Astrocyte of the cerebellum (primary cell): ENCODE measurements at regions of chr2 and their contacts with region 1.

Region 1: DNA sequence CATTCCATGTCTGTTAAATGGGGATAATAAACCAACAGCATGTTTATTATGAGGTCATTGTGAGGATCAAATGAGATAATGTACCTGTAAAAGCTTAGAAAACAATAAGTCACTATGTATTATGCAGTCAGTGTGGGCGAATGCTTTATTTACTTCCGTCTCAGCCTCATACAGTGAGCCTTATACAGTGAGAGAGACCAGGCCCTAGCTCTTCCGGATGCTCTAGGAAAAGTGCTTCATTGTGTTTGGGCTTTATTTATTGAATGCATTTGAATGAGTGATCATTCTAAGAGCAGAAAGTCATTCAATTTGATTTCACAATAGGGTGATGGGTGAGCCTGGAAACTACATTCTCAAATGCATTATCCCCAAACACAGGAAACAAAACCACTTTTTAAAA is 603.9 kb upstream of the FANCL start:
- DNase-seq: no peak
- H3K4me3 ChIP-seq: no peak overlapping the region
- CTCF ChIP-seq: no peak

Region 2: GRCh38 chr2:58739033-58739432 is 106.0 kb before region 1 on chr2:
- in situ Hi-C with region 1: no loop called
- DNase-seq: no peak
- H3K4me3 ChIP-seq: no peak overlapping the region
- CTCF ChIP-seq: no peak

Region 3: GRCh38 chr2:58769864-58770234 is 75.2 kb before region 1 on chr2:
- in situ Hi-C with region 1: no loop called
- DNase-seq: no peak
- H3K4me3 ChIP-seq: no peak overlapping the region
- CTCF ChIP-seq: no peak

Region 4: DNA sequence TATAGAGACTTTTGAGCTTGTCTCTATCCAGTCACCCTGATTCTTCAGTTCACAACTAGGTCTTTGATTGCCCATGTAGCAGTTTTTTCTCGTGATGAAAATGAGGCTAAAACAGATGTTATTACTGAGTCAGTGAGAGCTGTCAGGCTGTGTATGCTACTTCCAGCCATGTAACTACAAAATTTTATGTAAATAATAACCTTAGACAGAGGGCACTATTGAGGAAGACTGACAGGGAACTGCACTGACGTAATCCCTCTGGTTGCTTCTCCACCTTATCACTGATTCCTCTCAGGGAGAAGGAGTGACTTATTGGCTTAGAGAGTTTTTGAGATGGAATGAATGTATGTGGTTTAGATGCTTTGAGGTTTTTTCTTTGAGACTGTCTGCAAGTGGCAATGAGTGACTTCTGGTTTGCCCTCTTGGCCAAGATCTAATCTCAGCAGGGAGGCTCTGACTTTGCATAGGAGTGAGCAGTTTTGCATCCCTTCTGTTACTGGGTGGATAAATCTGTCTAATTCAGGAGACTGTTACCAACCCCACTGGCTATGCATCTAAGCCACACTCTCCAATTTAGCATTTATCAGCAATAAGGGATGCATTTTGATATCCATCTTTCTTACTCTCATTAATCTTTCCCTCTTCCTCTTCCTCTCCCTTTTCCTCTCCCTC is 48.6 kb before region 1 on chr2:
- in situ Hi-C with region 1: loop called (anchors 5 kb)
- DNase-seq: peak; percentile 1
- H3K4me3 ChIP-seq: no peak overlapping the region
- CTCF ChIP-seq: no peak